Tibial artery (tissue), 4 donors: ENCODE measurements at regions of chr5 and their contacts with region 1.

Region 1: GRCh38 chr5:129904102-129904666 is at the start of gene CHSY3:
- DNase-seq: peak; percentile 89 to 95
- H3K4me3 ChIP-seq: peak within 1 kb of the TSS; percentile 88 to 93
- H3K27ac ChIP-seq: peak within 1 kb of the TSS; percentile 89 to 92
- H3K4me1 ChIP-seq: peaks cover 0 to 24% (median 11%) of the 10 kb centered on the region in 4 donors
- H3K27me3 ChIP-seq: no peaks in the 10 kb centered on the region
- CTCF ChIP-seq: peak in 1 of 2 experiments; percentile 35

Region 2: DNA sequence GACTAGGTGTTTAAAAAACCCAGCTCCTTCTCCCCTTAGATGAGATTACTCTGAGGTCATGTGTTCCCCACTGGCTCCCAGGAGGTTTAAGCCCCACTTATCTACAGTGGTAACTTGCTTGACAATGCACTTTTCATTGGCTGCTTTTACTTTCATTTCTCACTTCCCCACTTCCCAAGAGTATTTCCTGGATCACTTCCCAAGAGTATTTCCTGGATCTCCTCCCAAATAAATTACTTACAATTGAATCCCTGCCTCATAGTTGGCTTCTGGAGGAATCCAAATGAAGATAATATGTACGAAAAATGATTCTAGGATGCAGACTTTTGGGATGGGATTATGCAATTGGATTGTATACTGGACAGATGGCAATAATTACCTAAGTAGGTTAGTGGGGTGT is 47.1 kb before region 1 on chr5:
- intact Hi-C with region 1: no loop called
- DNase-seq: no peak
- H3K4me3 ChIP-seq: no peak overlapping the region
- H3K27ac ChIP-seq: no peak overlapping the region
- H3K4me1 ChIP-seq: no peaks in the 10 kb centered on the region
- H3K27me3 ChIP-seq: no peaks in the 10 kb centered on the region
- CTCF ChIP-seq: no peak

Region 3: GRCh38 chr5:129963359-129963758 is 59.2 kb after region 1 on chr5:
- intact Hi-C with region 1: loop called (anchors 10 kb)
- DNase-seq: no peak
- H3K4me3 ChIP-seq: no peak overlapping the region
- H3K27ac ChIP-seq: peak overlapping the region; percentile 57 to 72
- H3K4me1 ChIP-seq: peaks cover 0 to 72% (median 13%) of the 10 kb centered on the region in 4 donors
- H3K27me3 ChIP-seq: no peaks in the 10 kb centered on the region
- CTCF ChIP-seq: no peak

Region 4: GRCh38 chr5:130141659-130142320 is 237.6 kb after region 1 on chr5:
- intact Hi-C with region 1: loop called (anchors 5 kb)
- DNase-seq: no peak
- H3K4me3 ChIP-seq: no peak overlapping the region
- H3K27ac ChIP-seq: no peak overlapping the region
- H3K4me1 ChIP-seq: peaks cover 0 to 28% (median 14%) of the 10 kb centered on the region in 4 donors
- H3K27me3 ChIP-seq: no peaks in the 10 kb centered on the region
- CTCF ChIP-seq: peak; percentile 36 to 43

Region 5: DNA sequence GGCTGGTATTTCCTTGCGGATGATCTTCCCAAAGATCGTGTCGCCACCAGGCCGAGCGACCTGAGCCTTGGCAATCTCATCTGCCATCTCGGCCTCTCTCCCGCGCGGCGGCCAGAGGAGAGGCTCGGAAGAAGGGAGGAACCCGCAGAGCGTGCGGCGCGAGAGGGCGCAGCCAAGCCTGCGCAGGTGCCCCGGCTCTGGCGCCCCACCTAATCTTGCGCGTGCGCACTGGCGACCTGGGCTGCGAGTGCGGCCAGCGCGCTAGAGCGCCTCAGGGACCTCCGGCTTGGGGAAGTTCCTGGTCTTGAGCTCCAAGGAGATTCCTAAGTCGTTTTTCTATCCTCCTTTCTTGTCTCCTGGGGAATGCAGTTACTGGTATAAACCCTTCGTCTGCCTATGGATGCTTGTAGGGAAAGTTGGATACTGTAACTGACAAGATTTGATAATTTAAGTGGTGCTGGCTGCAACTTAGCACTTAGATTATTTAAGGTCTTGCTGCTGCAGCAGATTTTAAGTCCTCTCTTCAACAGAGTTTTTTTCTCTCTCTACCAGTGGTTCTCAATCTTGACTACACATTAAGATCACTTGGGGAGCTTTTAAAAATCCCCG is 1261.0 kb after region 1 on chr5 and contains the start of gene HINT1:
- intact Hi-C with region 1: loop called (anchors 10 kb)
- DNase-seq: peak; percentile 83 to 93
- H3K4me3 ChIP-seq: peak within 1 kb of the TSS; percentile 68 to 75
- H3K27ac ChIP-seq: peak within 1 kb of the TSS; percentile 87 to 93
- H3K4me1 ChIP-seq: peaks cover 0 to 23% (median 7%) of the 10 kb centered on the region in 4 donors
- H3K27me3 ChIP-seq: no peaks in the 10 kb centered on the region
- CTCF ChIP-seq: no peak

Region 6: GRCh38 chr5:131417240-131417869 is 1513.2 kb after region 1 on chr5:
- intact Hi-C with region 1: loop called (anchors 10 kb)
- DNase-seq: peak; percentile 63 to 83
- H3K4me3 ChIP-seq: no peak overlapping the region
- H3K27ac ChIP-seq: no peak overlapping the region
- H3K4me1 ChIP-seq: no peaks in the 10 kb centered on the region
- H3K27me3 ChIP-seq: no peaks in the 10 kb centered on the region
- CTCF ChIP-seq: peak; percentile 80 to 84